ENCODE measurements at regions of chr11 and their contacts with region 1.

Region 1: DNA sequence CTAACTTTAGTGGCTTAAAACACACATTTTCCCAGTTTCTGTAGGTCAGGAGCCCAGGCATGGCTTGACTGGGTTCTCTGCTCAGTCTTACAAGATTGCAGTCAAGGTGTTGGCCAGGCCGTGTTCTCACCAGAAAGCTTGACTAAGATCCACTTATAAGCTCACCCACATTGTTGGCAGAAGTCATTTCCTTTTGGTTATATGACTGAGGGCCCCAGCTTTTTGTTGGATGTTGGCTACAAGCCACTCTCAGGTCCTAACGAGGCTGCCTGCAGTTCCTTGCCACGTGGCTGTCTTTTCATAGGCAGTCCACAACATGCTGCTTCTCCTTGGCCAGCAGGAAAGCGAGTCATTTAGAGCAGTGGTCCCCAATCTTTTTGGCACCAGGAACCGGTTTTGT is 79.3 kb upstream of the CRTAM start:
- DNase-seq: no peak
- H3K4me3 ChIP-seq: no peak overlapping the region
- H3K27ac ChIP-seq: no peak overlapping the region
- H3K27me3 ChIP-seq: no peaks in the 10 kb centered on the region
- CTCF ChIP-seq: no peak

Region 2: GRCh38 chr11:122468965-122469364 is 290.0 kb before region 1 on chr11:
- CTCF ChIA-PET with region 1: no interaction called
- POLR2A ChIA-PET with region 1: no interaction called
- DNase-seq: no peak
- H3K4me3 ChIP-seq: no peak overlapping the region
- H3K27ac ChIP-seq: no peak overlapping the region
- H3K27me3 ChIP-seq: no peaks in the 10 kb centered on the region
- CTCF ChIP-seq: no peak

Region 3: GRCh38 chr11:122505304-122506006 is 253.5 kb before region 1 on chr11:
- CTCF ChIA-PET with region 1: no interaction called
- POLR2A ChIA-PET with region 1: no interaction called
- DNase-seq: peak; percentile 81
- H3K4me3 ChIP-seq: no peak overlapping the region
- H3K27ac ChIP-seq: no peak overlapping the region
- H3K27me3 ChIP-seq: no peaks in the 10 kb centered on the region
- CTCF ChIP-seq: peak; percentile 90

Region 4: DNA sequence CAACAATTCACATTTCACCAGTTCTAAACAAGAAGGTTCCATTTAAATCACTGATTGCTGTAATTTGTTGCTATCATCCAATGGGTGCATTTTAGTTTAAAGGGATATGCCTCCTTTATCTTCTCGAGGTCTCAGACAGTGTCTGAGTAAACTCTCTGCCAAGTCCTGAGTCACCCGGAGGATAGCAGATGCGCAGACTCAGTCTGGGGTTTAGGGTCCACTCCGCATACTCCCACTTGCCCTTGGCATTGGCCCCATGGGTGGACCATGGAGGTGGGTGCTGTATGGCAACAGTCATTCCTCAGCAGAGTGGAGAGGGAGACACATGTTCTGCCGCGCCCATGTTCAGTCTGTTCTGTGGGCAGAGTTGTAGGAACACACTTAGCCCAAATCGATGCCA is 14.0 kb after region 1 on chr11:
- CTCF ChIA-PET with region 1: interaction called, 10 read pairs
- POLR2A ChIA-PET with region 1: interaction called, 4 read pairs
- DNase-seq: no peak
- H3K4me3 ChIP-seq: no peak overlapping the region
- H3K27ac ChIP-seq: no peak overlapping the region
- H3K27me3 ChIP-seq: no peaks in the 10 kb centered on the region
- CTCF ChIP-seq: no peak

Region 5: DNA sequence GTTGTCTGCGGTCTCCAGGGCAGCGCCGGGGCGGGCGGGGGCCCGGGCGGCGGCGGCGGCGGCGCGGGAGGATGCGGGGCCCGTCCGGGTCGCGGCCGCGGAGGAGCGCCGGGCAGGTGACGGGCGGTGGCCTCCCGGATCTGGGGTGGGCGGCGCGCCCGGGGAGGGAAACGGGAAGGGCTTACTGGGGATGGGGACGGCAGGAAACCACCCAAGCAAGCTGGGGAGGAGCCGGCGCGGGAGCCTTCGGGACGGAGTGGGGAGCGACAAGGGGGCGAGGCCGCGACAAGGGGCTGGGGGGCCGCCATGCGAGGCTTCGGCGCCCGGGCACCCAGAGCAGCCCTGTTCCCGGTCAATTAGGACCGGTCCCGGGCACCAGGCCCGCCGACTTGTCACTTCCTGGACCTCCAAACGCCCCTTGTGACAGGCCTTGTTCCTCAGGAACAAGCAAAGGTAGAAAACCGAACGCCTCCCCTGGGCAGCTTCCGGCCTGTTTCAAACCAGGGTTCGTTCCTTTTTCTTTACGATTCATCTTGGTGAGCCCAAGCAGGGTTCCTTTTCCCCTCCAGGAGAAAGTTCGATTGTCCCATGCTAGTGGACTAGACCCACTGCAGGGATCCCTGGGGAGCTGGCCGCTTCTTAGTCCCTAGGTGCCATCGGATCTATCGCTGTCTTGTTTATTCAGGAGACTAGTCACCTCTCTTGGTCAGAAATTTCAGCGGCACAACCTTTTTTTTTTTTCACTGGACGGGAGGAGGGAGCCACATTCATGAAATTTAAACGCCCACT is 124.1 kb after region 1 on chr11:
- CTCF ChIA-PET with region 1: no interaction called
- POLR2A ChIA-PET with region 1: no interaction called
- DNase-seq: no peak
- H3K4me3 ChIP-seq: peak overlapping the region; percentile 61
- H3K27ac ChIP-seq: peak overlapping the region; percentile 52
- H3K27me3 ChIP-seq: peaks cover 28% of the 10 kb centered on the region
- CTCF ChIP-seq: no peak

Region 6: GRCh38 chr11:123083623-123084029 is 324.7 kb after region 1 on chr11:
- CTCF ChIA-PET with region 1: no interaction called
- POLR2A ChIA-PET with region 1: no interaction called
- DNase-seq: peak; percentile 90
- H3K4me3 ChIP-seq: no peak overlapping the region
- H3K27ac ChIP-seq: peak overlapping the region; percentile 71
- H3K27me3 ChIP-seq: no peaks in the 10 kb centered on the region
- CTCF ChIP-seq: no peak

Measured in AG04450 (cell line).